Right ventricle myocardium superior (tissue), 1 donor: ENCODE measurements at regions of chr15 and their contacts with region 1.

Region 1: DNA sequence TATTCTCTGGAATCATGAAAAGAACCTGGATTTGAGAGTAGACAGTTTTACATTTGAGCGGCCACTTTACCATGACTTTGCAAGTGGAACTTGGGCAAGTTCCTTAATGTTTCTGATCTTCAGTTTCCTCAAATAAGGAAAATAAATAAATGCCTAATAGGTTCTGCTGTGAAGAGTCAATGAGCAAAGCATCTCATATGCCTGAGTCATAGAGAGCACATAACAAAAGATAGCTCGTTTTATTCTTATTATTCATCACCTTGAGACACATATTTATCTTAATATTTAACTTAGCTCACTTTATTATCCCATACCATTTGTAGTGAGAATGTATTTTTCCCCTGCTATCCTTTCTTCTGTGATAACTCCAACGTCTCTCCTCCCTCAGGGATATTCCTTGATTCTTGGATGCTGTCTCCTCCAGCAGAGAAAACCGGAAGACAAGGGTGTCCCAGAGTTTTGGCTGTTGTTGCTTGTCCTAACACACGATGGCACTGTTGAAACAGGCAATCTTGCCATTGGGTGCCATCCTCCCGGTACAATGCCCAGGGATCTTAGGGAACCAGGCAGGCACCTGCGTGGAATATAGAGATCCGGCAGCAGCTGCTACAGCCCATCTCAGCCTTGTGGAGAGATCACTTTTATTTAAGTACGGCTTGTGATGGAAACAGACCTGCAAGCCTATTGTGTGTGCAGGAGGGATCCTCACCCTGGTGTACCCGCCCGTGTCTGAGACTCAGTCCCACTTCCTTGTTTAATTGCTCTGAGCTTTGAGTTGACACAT is 33.3 kb upstream of the VPS33B start:
- DNase-seq: no peak
- ATAC-seq: peak; percentile 89

Region 2: GRCh38 chr15:90742087-90742486 is 313.7 kb before region 1 on chr15:
- intact Hi-C with region 1: no loop called
- DNase-seq: no peak
- ATAC-seq: no peak

Region 3: GRCh38 chr15:91099616-91099994 is 43.9 kb after region 1 on chr15:
- intact Hi-C with region 1: no loop called
- DNase-seq: no peak
- ATAC-seq: no peak

Region 4: DNA sequence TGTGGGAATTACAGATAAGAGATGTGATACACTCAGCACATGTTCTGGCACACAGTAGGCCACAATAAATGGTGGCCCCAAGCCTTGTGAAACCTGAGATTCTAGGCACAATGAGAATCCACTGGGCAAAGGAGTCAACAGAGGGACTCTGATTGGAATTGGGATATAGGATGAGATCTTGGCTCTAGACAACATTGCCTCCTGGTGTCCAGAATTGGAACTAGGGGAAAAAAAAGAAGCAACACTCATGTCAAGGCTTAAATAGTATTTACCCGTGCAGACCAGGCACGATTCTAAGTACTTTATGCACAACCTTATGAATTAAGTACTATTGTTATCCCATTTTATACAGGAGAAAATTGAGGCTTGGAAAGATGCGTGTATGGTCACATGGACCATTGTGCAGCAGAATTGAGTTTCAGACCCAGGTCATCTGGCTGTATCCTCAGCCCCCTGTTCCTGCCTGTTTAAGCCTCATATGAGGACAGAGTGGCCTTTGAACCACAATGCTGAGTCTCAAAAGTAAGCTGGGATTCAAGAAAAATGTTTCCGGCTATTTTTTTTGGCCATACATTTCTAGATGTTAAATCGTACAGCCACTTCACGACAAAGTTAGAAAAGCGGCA is 169.1 kb after region 1 on chr15:
- intact Hi-C with region 1: loop called (anchors 5 kb)
- DNase-seq: no peak
- ATAC-seq: peak; percentile 50

Region 5: DNA sequence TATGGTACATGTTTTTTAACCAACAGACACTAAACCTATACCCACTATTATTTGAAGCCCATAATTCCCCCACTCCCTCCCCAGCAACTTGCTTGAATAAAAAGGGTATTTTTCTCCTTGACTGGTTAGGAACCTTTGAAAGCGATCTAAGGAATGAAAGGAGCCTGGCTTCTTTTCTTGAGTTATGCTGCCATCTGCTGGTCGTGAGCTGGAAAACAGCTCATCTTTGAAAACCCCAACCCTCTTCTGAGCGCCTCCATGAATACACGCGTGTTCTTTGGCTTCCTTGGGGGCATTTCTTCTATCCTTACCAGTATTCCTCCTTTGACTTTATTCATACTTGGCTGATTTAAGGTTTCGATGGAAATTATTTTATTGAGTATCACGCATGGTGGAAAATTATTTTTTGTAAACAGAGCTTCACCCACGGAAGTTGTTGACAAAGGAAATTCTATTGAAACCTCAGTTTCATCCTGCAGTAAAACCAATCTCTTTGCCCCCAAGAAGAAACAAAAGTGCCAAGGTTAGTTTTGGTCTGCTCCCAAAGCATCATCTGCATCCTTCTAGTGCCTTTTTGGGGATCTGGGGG is 215.9 kb after region 1 on chr15:
- intact Hi-C with region 1: loop called (anchors 2 kb)
- DNase-seq: no peak
- ATAC-seq: peak; percentile 85

Region 6: DNA sequence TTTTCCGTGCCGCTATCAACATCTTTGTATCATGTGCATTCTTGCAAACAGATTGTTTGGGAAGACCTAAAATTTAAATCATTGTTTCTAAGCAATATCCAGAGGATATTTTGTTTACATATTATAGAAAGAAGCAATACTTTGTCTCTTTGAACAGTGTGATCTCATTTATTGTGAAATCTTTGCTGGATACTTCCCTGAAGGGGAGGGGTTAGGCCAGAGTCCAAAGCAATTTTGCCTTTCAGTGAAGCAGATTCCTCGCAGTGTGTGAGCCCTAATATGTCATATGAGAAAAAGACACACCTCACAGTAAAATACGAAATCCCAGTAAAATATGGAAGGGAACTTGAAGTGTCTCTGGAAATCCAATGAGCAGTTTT is 639.1 kb after region 1 on chr15:
- intact Hi-C with region 1: no loop called
- DNase-seq: no peak
- ATAC-seq: peak; percentile 91